ENCODE measurements at regions of chr2 and their contacts with region 1.

Region 1: GRCh38 chr2:150528861-150529801 is 41.7 kb upstream of the RND3 start:
- DNase-seq: peak; percentile 79
- ATAC-seq: peak; percentile 47
- H3K4me3 ChIP-seq: peak overlapping the region; percentile 5; the same call in 1 of the 2 replicates
- H3K27ac ChIP-seq: peak overlapping the region; percentile 90
- H3K4me1 ChIP-seq: peaks cover 29% of the 10 kb centered on the region
- H3K27me3 ChIP-seq: no peaks in the 10 kb centered on the region
- CTCF ChIP-seq: no peak
- POLR2A ChIP-seq: no peak
- RAD21 ChIP-seq: no peak

Region 2: DNA sequence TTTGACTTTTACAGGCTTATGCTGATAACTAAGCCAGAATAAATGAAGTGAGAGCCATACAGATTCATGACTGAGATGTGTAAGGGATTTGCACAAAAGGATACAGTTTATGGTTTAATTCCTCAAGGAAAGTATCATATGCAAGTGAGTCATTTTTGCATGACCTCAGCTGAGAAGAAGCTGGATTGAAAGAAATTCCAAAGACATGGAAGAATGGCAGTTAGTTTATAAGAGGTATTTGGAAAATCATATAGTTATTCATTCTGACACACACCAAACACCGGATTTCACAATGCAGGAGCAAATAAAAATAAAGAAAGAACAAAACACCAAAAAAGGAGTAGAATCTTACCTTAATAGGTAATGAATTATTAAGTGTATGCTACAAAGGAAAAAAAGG is 41.6 kb after region 1 on chr2:
- CTCF ChIA-PET with region 1: no interaction called
- POLR2A ChIA-PET with region 1: interaction called, 4 read pairs
- dilution Hi-C with region 1: no loop called
- in situ Hi-C with region 1: no loop called
- intact Hi-C with region 1: loop called (anchors 2 kb)
- DNase-seq: peak; percentile 96
- ATAC-seq: peak; percentile 80
- H3K4me3 ChIP-seq: no peak overlapping the region
- H3K27ac ChIP-seq: peak overlapping the region; percentile 98; the same call in 1 of the 2 replicates
- H3K4me1 ChIP-seq: peaks cover 24% of the 10 kb centered on the region
- H3K27me3 ChIP-seq: no peaks in the 10 kb centered on the region
- CTCF ChIP-seq: no peak
- POLR2A ChIP-seq: no peak
- RAD21 ChIP-seq: no peak

Region 3: GRCh38 chr2:150644298-150645067 is 115.4 kb after region 1 on chr2:
- CTCF ChIA-PET with region 1: no interaction called
- POLR2A ChIA-PET with region 1: no interaction called
- dilution Hi-C with region 1: no loop called
- in situ Hi-C with region 1: no loop called
- intact Hi-C with region 1: no loop called
- DNase-seq: peak; percentile 85
- ATAC-seq: peak; percentile 81
- H3K4me3 ChIP-seq: no peak overlapping the region
- H3K27ac ChIP-seq: peak overlapping the region; percentile 42; the same call in 1 of the 2 replicates
- H3K4me1 ChIP-seq: peaks cover 16% of the 10 kb centered on the region
- H3K27me3 ChIP-seq: no peaks in the 10 kb centered on the region
- CTCF ChIP-seq: no peak
- POLR2A ChIP-seq: no peak
- RAD21 ChIP-seq: peak; percentile 9; the same call in 1 of the 2 replicates

Measured in IMR-90 (cell line).